ENCODE measurements at regions of chr4 and their contacts with region 1.

Region 1: DNA sequence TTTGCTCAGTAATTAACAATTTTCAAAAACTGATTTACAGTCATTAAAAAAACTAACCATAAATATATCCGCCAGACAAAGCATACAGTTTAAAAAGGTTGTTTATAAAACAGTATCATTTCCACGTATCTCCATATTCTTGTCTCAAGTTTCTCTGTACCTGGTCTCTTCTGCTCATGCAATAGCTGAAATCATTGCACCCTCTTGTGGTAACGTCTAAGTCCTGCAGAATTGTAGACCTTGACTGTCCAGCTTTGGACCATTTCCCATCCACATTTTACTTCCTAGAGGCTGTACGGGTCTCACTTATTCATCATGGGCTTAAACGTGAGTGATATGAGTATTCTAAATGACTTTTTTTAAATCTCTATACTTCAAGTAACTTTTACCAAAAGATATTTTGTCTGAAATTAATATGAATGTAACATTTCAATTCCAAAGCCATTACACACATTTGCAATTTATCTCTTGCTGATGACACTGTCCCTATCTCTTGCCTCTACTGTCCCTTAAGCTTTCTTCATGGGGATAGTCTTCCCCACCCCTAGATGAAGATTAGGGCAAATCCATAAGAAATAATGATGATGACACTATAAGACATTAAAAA is 118.5 kb downstream of the BTC start:
- DNase-seq: no peak
- ATAC-seq: no peak
- H3K4me3 ChIP-seq: no peak overlapping the region
- H3K27ac ChIP-seq: no peak overlapping the region
- H3K4me1 ChIP-seq: no peaks in the 10 kb centered on the region
- H3K27me3 ChIP-seq: no peaks in the 10 kb centered on the region

Region 2: DNA sequence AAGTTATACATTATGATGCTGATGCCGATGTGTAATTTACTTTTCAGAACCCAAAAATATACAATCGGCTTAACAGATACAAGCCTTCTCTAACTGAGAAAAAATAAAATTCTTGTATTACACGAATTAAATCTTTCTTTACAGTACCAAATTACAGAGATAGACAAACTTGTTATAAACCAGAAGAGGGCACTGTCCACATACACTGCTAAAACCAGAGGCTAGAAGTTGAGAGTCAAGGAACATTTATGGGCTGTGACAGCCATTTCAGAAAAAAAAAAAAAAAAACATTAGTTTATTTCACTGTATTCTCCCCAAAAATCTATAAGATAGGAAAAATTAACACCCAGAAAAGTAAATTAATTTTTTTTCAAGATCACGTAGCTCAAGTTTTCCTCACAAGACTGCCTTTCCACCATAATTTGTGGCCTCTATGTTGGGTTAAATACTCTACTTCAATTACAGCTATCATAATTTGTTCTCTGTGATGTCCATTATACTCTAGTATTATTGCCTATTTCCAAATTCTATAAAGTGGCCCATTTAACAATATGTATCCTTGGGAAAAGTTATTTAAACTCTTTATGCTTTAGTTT is 298.8 kb before region 1 on chr4:
- intact Hi-C with region 1: loop called (anchors 2 to 5 kb)
- DNase-seq: no peak
- ATAC-seq: peak; percentile 80
- H3K4me3 ChIP-seq: no peak overlapping the region
- H3K27ac ChIP-seq: no peak overlapping the region
- H3K4me1 ChIP-seq: no peaks in the 10 kb centered on the region
- H3K27me3 ChIP-seq: no peaks in the 10 kb centered on the region

Region 3: GRCh38 chr4:74431113-74431826 is 244.5 kb before region 1 on chr4:
- intact Hi-C with region 1: no loop called
- DNase-seq: no peak
- ATAC-seq: no peak
- H3K4me3 ChIP-seq: no peak overlapping the region
- H3K27ac ChIP-seq: no peak overlapping the region
- H3K4me1 ChIP-seq: no peaks in the 10 kb centered on the region
- H3K27me3 ChIP-seq: no peaks in the 10 kb centered on the region

Region 4: DNA sequence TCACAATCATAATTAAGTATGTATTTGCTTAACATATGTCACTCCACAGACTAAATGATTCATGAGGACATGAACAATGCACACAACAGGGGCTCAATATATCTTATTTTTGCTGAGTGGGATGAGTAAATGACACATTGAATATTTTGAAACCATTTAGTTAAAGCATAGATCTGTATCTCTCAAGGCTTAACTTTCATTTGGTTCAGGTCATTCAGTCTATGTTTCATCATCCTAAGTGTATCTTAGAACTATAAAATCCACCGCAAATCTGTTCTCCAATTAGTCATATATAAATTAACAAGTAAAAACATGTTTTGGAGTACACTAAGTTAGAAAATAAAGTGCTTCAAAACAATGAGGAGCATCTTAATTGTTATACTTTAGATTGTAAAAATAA is 185.0 kb before region 1 on chr4:
- intact Hi-C with region 1: no loop called
- DNase-seq: no peak
- ATAC-seq: no peak
- H3K4me3 ChIP-seq: no peak overlapping the region
- H3K27ac ChIP-seq: no peak overlapping the region
- H3K4me1 ChIP-seq: no peaks in the 10 kb centered on the region
- H3K27me3 ChIP-seq: no peaks in the 10 kb centered on the region

Region 5: GRCh38 chr4:74531963-74532794 is 143.6 kb before region 1 on chr4:
- intact Hi-C with region 1: loop called (anchors 5 kb)
- DNase-seq: no peak
- ATAC-seq: no peak
- H3K4me3 ChIP-seq: no peak overlapping the region
- H3K27ac ChIP-seq: no peak overlapping the region
- H3K4me1 ChIP-seq: peaks cover 0 to 2% of the 10 kb centered on the region in 2 donors
- H3K27me3 ChIP-seq: no peaks in the 10 kb centered on the region

Region 6: GRCh38 chr4:74793757-74794340 is 118.1 kb after region 1 on chr4:
- intact Hi-C with region 1: no loop called
- DNase-seq: peak; percentile 71 to 87
- ATAC-seq: peak; percentile 83
- H3K4me3 ChIP-seq: peak overlapping the region; percentile 56 to 78
- H3K27ac ChIP-seq: peak overlapping the region in 1 of 2 donors; percentile 74
- H3K4me1 ChIP-seq: peaks cover 0 to 3% of the 10 kb centered on the region in 2 donors
- H3K27me3 ChIP-seq: no peaks in the 10 kb centered on the region